ENCODE measurements at regions of chr4 and their contacts with region 1.

Region 1: DNA sequence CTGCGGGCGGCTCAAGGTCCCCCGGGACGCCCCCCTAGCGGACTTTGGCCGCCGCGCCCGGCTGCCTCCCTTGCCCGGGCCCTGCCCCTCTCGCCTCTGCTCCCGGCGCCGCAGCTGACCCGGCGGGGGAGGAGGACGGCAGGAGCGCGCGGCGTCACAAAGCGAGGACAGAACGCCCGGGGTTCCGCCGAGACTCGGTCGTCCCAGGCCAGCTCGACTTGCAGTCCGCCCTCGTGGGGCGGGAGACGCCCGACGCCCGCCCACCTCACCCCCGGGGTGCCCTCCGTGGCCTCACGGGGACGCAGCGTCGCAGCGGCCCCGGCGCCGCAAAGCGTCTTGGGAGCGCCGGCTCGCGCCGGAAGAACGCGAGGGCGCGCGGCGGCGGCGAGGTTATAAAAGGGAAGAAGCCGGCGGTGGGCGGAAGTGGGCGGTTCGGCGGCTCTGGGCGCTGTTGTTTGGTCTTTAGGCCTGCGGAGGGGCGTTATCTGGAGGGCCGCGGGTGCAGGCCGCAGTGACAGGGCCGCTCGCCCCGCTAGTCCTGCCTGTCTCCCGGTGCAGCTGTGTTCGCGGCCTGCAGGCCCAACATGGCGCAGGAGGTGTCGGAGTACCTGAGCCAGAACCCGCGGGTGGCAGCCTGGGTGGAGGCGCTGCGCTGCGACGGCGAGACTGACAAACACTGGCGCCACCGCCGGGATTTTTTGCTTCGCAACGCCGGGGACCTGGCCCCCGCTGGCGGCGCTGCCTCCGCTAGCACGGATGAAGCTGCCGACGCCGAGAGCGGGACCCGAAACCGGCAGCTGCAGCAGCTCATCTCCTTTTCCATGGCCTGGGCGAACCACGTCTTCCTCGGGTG is at the start of gene CDKN2AIP:
- DNase-seq: peak; percentile 93
- H3K4me3 ChIP-seq: peak within 1 kb of the TSS; percentile 34 to 68 (median 66)
- H3K27ac ChIP-seq: peak within 1 kb of the TSS; percentile 89
- H3K4me1 ChIP-seq: peaks cover 21% of the 10 kb centered on the region
- H3K27me3 ChIP-seq: no peaks in the 10 kb centered on the region
- CTCF ChIP-seq: no peak
- POLR2A ChIP-seq: peak; percentile 85
- total RNA-seq, gene CDKN2AIP: 10.4 and 12.8 TPM in 2 replicates

Region 2: DNA sequence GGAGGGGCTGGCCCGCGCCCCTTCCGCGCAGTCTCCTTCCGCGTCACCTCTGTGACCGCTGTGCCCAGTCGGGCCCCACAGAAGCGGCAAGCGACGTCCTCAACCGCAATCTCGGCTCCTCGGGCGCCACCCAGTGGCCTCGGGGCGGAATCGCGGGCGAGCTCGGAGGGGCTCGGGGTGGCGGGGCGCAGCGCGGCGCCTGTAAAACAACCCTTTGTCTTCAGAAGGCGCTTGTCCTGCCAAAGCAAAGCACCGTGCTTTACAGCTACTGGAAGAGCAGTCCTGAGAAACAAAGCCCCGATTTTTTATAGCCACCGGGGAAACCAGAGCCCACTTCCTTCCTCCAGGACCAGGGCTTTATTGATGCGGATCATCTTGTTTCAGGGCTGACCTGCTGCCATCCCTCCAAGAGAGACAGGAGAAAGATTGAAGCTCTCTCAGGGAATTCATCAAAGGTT is 37.3 kb before region 1 on chr4:
- CTCF ChIA-PET with region 1: interaction called, 20 read pairs
- POLR2A ChIA-PET with region 1: no interaction called
- dilution Hi-C with region 1: no loop called
- intact Hi-C with region 1: loop called (anchors 1 kb)
- DNase-seq: peak; percentile 90
- H3K4me3 ChIP-seq: peak overlapping the region; percentile 28 to 70 (median 33)
- H3K27ac ChIP-seq: peak overlapping the region; percentile 39
- H3K4me1 ChIP-seq: peaks cover 7% of the 10 kb centered on the region
- H3K27me3 ChIP-seq: no peaks in the 10 kb centered on the region
- CTCF ChIP-seq: peak; percentile 91 to 96
- POLR2A ChIP-seq: no peak

Region 3: DNA sequence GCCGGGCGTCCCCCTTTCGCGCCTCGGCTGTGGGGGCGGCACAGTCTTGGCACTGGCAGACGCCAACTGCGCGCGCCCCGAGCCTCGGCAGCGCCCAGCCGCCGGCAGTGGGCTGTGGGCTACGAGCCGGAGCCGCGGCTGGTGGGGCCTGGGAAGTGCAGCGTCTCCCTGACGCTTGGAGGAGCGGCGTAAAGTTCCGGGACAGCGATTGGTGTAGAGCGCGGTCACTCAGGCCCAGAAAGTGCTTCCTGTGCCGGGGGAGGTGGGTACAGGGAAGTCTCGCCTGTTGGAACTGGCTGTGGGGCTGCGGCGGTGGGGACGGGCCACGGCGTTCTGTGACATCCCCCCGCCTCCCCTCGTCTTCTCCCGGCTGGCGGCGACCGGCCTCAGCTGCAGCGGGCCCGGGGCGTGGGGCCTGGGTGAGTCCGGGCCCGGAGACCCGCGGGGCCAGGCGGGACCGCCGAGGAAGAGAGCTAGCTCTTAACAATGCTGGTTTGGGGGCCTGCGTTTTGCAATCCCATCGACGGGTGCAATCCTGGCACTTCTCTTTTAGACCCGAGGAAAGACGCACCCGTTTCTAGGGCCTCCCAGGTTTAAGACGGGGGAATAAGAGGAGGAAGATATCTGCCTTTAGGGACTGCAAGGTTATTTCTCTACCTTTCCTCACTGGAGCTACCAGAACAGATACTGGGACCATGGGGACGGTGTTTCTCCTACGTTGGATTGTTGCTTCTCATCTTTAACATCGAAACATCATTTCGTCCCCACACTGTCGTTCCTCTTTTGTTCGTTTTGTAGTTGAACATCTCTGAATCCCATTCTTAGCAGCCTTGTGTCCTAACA is 214.8 kb after region 1 on chr4 and contains the starts of genes RWDD4 and TRAPPC11:
- CTCF ChIA-PET with region 1: interaction called, 3 read pairs
- POLR2A ChIA-PET with region 1: no interaction called
- dilution Hi-C with region 1: no loop called
- intact Hi-C with region 1: loop called (anchors 1 kb)
- DNase-seq: peak; percentile 99
- H3K4me3 ChIP-seq: peak within 1 kb of the TSS; percentile 51 to 69 (median 64)
- H3K27ac ChIP-seq: peak within 1 kb of the TSS; percentile 58
- H3K4me1 ChIP-seq: peaks cover 13% of the 10 kb centered on the region
- H3K27me3 ChIP-seq: no peaks in the 10 kb centered on the region
- CTCF ChIP-seq: peak in 1 of 2 donors; percentile 13
- POLR2A ChIP-seq: peak; percentile 53
- total RNA-seq, gene RWDD4: 16.6 and 16.8 TPM in 2 replicates
- total RNA-seq, gene TRAPPC11: 29.7 and 32.1 TPM in 2 replicates